Activated T-helper 1 cell treated with anti-CD3 and anti-CD28 coated beads, Interleukin-12 subunit alpha, Interleukin-12 subunit beta, Interleukin-2, Interleukin-4 antibody, amounts not matched to agents 30 ng/mL and 10 ng/mL and 1 ng/mL, durations not matched to agents 14 hours and 24 hours and 36 hours (primary cell): ENCODE measurements at regions of chr19 and their contacts with region 1.

Region 1: DNA sequence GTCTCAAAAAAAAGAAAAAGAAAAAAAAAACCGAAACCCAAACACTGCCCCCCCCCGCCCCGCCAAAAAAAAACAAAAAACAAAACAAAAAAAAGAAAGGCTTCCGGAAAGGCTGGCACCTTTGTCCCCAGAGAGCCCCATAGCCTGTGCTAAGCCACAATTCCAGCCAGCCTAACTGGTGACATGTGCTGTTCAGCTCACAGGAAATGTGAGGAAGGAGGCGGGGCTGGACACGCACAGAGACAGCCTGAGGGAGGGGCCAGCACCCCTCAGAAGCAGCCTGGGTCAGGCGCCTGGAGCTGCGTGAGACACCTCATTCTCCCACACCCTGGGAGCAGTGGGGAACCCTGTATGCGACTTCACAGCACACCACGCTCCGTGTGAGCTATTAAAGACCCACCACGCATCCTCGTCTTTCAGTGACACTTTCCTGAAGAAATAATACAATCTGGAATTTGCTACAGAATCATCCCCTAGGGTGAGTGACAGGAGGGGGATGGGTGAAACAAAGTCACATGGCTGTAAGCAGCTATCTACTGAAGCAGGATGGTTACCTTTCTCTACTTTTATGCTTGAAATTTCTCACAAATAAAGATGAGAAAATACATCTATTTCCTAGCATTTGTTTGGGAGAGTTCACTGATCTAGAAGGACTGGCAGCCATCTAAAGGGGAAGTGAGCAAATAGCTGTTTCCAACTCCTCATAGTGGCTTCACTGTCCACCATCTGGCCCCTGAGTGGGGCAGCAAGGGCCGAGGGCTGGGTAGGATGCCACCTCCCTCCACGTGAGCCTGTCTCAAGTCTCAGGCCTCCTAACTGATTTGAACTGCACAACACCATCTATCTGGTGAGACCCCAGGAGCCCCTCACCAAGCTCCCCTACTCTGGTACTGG is 12.3 kb upstream of the SLC35E1 start:
- DNase-seq: peak; percentile 88
- H3K4me3 Mint-ChIP-seq: peak overlapping the region; percentile 87
- H3K27ac Mint-ChIP-seq: peak overlapping the region; percentile 90
- H3K4me1 Mint-ChIP-seq: peaks cover 73% of the 10 kb centered on the region
- H3K27me3 Mint-ChIP-seq: no peaks in the 10 kb centered on the region

Region 2: DNA sequence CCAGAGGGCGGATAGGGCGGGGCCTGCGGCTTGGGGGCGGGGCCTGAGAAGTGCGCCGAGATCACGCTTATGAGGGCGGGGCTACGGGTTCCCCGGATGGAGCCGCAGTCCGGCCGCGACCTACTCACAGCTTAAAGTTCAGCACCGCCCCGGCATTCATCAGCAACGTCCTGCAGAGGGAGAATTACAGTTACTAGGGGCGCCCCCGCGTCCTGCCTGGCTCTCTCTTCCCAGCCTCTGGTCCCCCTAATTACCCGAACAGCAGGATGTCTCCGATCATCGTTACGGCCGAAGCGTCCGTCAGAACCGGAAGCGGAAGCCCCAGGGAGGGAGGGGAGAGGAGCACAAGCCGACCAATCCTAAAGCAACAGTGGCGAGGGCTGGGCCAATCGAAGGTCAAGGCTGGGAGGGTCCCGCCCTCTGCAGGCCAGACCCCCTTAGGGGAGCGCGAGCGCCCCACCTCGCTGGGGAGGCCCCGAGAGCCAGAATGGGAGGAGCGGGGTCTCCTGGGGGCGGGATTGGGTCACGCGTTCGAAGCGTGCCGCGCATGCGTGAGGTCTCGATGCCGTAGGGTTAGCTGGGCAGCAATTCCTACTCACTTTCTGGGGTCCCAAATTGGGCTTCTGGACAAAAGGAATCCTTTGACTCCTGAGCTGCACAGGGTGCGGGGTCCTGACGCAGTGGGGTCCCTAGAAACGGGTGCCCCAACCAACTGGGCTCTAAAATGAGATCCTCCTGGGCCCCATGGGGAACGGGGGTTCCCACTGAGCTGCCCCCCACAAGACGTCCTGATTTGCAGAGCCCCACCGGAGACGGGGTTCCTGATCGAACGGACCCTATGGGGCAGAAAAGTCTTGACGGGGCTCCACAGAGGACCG is 75.6 kb after region 1 on chr19 and contains the start of gene SMIM7:
- intact Hi-C with region 1: loop called (anchors 1 kb)
- DNase-seq: peak; percentile 98
- H3K4me3 Mint-ChIP-seq: peak within 1 kb of the TSS; percentile 94
- H3K27ac Mint-ChIP-seq: peak within 1 kb of the TSS; percentile 97
- H3K4me1 Mint-ChIP-seq: peaks cover 27% of the 10 kb centered on the region
- H3K27me3 Mint-ChIP-seq: peaks cover 13% of the 10 kb centered on the region
- total RNA-seq, gene SMIM7: 69.3 and 72.7 TPM in 2 replicates

Region 3: DNA sequence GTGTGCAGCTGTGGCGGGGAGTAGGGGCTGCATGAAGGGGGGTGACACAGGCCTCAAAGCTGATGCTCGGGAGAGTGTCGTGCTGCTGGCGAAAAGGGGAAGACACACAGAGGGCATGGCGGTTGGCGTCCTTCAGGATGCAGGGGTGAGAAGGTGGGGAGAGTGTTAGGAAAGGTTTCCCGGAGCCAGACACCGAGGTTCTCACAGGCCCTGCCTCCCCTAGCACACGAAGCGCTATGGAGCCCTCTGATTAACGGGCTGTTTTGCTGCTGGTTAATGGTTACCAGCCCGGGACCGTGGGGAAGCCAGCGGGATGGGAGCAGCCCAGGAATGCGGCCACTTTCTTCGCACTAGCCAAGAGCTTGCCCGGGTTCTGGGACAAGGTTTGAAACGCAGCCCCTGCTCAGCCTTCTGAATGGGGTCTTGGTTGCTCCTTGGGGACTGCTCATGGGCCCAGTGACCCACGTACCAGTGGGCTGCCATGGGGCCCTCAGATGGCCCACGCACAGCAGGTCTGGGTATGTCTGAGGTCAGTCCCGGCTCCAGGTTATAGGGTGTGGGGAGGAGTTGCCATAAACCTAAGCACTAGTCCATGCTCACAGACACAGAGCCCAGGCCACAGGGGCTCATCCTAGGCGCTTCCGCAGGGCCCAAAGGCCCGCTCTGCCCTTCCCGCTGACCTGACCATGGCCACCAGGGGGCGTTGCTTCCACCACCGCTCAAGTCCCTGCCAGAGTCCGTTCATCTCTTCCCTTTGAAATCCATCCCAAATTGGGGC is 1884.8 kb after region 1 on chr19:
- intact Hi-C with region 1: no loop called
- DNase-seq: peak; percentile 43
- H3K4me3 Mint-ChIP-seq: no peak overlapping the region
- H3K27ac Mint-ChIP-seq: no peak overlapping the region
- H3K4me1 Mint-ChIP-seq: peaks cover 15% of the 10 kb centered on the region
- H3K27me3 Mint-ChIP-seq: no peaks in the 10 kb centered on the region